Right ventricle myocardium inferior (tissue), 1 donor: ENCODE measurements at regions of chr21 and their contacts with region 1.

Region 1: GRCh38 chr21:25895565-25896205 is 160.9 kb downstream of the GABPA start:
- DNase-seq: no peak
- ATAC-seq: peak; percentile 62

Region 2: DNA sequence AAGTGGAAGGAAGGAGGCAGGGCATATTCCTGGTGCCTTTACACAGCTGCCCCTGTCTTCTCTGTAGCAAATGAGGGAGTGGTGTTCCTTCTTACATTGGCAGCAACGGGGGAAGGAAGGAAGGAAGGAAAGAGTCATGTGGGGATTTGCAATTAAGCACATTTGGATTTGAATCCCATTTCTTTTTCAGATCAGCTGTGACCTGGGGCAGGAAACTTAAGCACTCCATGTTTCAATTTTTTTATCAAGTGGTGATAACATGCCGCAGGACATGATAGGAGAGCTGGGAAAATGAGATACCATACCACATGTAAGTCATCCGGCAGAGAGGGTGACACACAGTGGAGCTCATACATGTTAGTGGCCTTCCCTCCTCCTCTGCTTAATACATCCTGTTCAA is 88.1 kb after region 1 on chr21:
- intact Hi-C with region 1: loop called (anchors 10 kb)
- DNase-seq: no peak
- ATAC-seq: peak; percentile 87

Region 3: DNA sequence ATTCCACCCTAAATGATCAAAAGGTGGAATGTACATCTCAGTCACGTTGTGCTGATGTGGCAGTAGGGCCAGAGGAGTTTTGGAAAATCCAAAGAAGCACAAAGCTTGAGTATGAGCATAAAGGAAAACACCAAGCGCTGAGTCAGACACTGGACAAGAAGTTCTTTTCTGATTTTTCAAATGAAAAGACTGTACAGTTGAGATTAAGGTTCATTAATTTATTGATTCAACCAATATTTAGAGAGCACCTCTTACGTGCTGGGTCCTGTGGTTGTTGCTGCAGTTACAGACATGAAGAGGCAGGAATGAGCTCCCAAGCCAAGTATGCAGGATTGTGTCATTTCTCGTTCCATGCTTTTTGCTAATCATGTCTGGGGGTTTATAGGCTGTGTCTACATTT is 303.8 kb after region 1 on chr21:
- intact Hi-C with region 1: no loop called
- DNase-seq: no peak
- ATAC-seq: no peak

Region 4: GRCh38 chr21:26572702-26573381 is 677.2 kb after region 1 on chr21 and contains the start of gene CYYR1:
- intact Hi-C with region 1: loop called (anchors 10 kb)
- DNase-seq: peak; percentile 72
- ATAC-seq: peak; percentile 23
- total RNA-seq, gene CYYR1: 27.3 TPM